Naive thymus-derived CD4-positive, alpha-beta T cell (primary cell): ENCODE measurements at regions of chr3 and their contacts with region 1.

Region 1: GRCh38 chr3:102536456-102536855 is 101.6 kb downstream of the ZPLD1 start:
- DNase-seq: peak in 6 of 9 donors; percentile 3 to 34 (median 22)
- ATAC-seq: peak; percentile 60
- H3K4me3 ChIP-seq: no peak overlapping the region
- H3K4me3 Mint-ChIP-seq: no peak overlapping the region
- H3K27ac ChIP-seq: no peak overlapping the region
- H3K27ac Mint-ChIP-seq: no peak overlapping the region
- H3K4me1 ChIP-seq: no peaks in the 10 kb centered on the region
- H3K4me1 Mint-ChIP-seq: peaks cover 0 to 6% (median 5%) of the 10 kb centered on the region in 7 donors
- H3K27me3 ChIP-seq: no peaks in the 10 kb centered on the region
- H3K27me3 Mint-ChIP-seq: peaks cover 0 to 11% (median 5%) of the 10 kb centered on the region in 5 donors

Region 2: DNA sequence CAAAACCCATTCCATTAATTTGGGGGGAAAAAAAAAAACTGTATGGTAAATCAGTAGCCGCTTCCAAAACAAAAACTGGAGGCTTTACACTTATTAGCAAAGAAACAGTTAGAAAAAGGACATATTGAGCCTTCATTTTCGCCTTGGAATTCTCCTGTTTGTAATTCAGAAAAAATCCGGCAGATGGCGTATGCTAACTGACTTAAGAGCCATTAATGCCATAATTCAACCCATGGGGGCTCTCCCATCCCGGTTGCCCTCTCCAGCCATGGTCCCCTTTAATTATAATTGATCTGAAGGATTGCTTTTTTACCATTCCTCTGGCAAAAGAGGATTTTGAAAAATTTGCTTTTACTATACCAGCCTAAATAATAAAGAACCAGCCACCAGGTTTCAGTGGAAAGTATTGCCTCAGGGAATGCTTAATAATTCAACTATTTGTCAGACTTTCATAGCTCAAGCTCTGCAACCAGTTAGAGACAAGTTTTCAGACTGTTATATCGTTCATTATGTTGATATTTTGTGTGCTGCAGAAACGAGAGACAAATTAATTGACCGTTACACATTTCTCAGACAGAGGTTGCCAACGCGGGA is 840.6 kb before region 1 on chr3:
- CTCF ChIA-PET with region 1: no interaction called
- POLR2A ChIA-PET with region 1: no interaction called
- intact Hi-C with region 1: loop called in 1 of 2 experiments (anchors 10 kb)
- DNase-seq: peak in 7 of 9 donors; percentile 30 to 65 (median 57)
- ATAC-seq: no peak
- H3K4me3 ChIP-seq: no peak overlapping the region
- H3K4me3 Mint-ChIP-seq: no peak overlapping the region
- H3K27ac ChIP-seq: no peak overlapping the region
- H3K27ac Mint-ChIP-seq: peak overlapping the region in 2 of 9 donors; percentile 8 to 45
- H3K4me1 ChIP-seq: no peaks in the 10 kb centered on the region
- H3K4me1 Mint-ChIP-seq: peaks cover 0 to 4% (median 3%) of the 10 kb centered on the region in 7 donors
- H3K27me3 ChIP-seq: no peaks in the 10 kb centered on the region
- H3K27me3 Mint-ChIP-seq: no peaks in the 10 kb centered on the region

Region 3: GRCh38 chr3:101809178-101810021 is 727.1 kb before region 1 on chr3:
- CTCF ChIA-PET with region 1: interaction called, 11 read pairs
- POLR2A ChIA-PET with region 1: interaction called, 3 read pairs
- intact Hi-C with region 1: loop called in 1 of 2 experiments (anchors 1 kb)
- DNase-seq: peak in 7 of 9 donors; percentile 31 to 67 (median 57)
- ATAC-seq: peak; percentile 88
- H3K4me3 ChIP-seq: no peak overlapping the region
- H3K4me3 Mint-ChIP-seq: peak overlapping the region in 8 of 10 donors; percentile 23 to 66 (median 60)
- H3K27ac ChIP-seq: peak overlapping the region; percentile 34
- H3K27ac Mint-ChIP-seq: peak overlapping the region; percentile 51 to 93 (median 87)
- H3K4me1 ChIP-seq: peaks cover 0 to 27% of the 10 kb centered on the region in 2 donors
- H3K4me1 Mint-ChIP-seq: peaks cover 11 to 62% (median 54%) of the 10 kb centered on the region in 7 donors
- H3K27me3 ChIP-seq: no peaks in the 10 kb centered on the region
- H3K27me3 Mint-ChIP-seq: no peaks in the 10 kb centered on the region

Region 4: DNA sequence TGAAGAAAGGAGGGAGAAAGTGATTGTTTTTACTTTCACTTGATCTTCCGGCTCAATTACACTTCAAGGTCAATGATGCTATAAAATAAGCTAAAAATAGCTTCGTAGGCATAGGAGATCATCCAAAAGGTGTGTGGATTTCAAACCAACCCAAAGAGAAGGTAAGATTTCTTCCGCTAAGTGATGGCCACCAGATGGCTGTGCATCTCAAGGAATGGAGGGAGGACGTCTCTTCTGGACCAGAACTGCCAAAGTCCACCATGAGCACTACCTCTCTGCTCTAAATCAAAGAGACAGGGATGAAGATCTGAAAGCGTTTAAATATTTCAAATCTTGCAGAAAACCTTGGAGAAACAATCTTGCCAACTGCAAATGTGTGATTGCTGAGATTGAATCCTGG is 300.8 kb before region 1 on chr3:
- CTCF ChIA-PET with region 1: interaction called, 54 read pairs
- POLR2A ChIA-PET with region 1: no interaction called
- intact Hi-C with region 1: loop called in 1 of 2 experiments (anchors 1 kb)
- DNase-seq: peak in 2 of 9 donors; percentile 24 to 25
- ATAC-seq: no peak
- H3K4me3 ChIP-seq: no peak overlapping the region
- H3K4me3 Mint-ChIP-seq: no peak overlapping the region
- H3K27ac ChIP-seq: no peak overlapping the region
- H3K27ac Mint-ChIP-seq: no peak overlapping the region
- H3K4me1 ChIP-seq: no peaks in the 10 kb centered on the region
- H3K4me1 Mint-ChIP-seq: peaks cover 0 to 1% (median 0%) of the 10 kb centered on the region in 7 donors
- H3K27me3 ChIP-seq: no peaks in the 10 kb centered on the region
- H3K27me3 Mint-ChIP-seq: peaks cover 0 to 42% (median 3%) of the 10 kb centered on the region in 5 donors